Breast epithelium (tissue), 4 donors: ENCODE measurements at regions of chr22 and their contacts with region 1.

Region 1: GRCh38 chr22:24198682-24199052 is 17.4 kb downstream of the SUSD2 start:
- DNase-seq: no peak
- H3K4me3 ChIP-seq: no peak overlapping the region
- H3K27ac ChIP-seq: peak overlapping the region; percentile 78 to 89
- H3K4me1 ChIP-seq: peaks cover 0 to 5% of the 10 kb centered on the region in 2 donors
- H3K27me3 ChIP-seq: no peaks in the 10 kb centered on the region
- CTCF ChIP-seq: no peak
- POLR2A ChIP-seq: no peak

Region 2: DNA sequence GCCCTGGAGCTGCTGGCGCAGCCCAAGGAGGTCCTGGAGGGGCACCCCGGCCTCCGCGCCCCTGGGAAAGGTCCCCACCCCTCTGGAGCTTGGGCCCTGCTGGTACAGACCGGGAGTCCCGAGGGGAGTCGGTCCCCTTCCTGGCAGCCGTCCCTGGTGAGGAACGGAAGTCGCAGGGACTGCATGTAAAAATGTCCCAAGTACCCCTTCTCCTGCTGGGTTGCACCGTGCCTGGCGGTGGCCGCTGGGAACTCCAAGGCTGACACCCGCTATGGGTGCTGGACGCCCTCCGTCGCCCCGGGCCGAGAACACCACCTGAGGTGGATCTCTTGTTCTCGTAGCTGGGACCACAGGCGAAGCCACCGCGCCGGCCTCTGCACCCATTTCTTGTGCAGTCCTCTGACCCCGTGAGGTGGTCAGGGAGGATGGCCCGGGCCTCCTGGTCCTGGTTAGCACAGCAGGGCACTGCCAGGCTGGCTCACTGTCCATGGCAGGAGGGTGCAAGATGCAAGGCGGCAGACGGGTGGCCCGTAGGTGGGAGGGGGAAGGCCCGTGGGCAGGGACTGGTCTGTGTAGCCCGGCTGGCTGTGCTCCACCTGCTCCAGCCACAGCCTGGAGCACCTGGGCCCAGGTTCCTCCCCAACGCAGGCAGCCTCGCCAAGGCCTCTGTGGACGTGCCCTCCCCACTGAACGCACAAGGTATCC is 783.8 kb before region 1 on chr22:
- intact Hi-C with region 1: no loop called
- DNase-seq: no peak
- H3K4me3 ChIP-seq: no peak overlapping the region
- H3K27ac ChIP-seq: no peak overlapping the region
- H3K4me1 ChIP-seq: no peaks in the 10 kb centered on the region
- H3K27me3 ChIP-seq: no peaks in the 10 kb centered on the region
- CTCF ChIP-seq: no peak
- POLR2A ChIP-seq: no peak

Region 3: GRCh38 chr22:24037851-24038765 is 160.6 kb before region 1 on chr22:
- intact Hi-C with region 1: no loop called
- DNase-seq: no peak
- H3K4me3 ChIP-seq: no peak overlapping the region
- H3K27ac ChIP-seq: no peak overlapping the region
- H3K4me1 ChIP-seq: no peaks in the 10 kb centered on the region
- H3K27me3 ChIP-seq: no peaks in the 10 kb centered on the region
- CTCF ChIP-seq: no peak
- POLR2A ChIP-seq: no peak

Region 4: GRCh38 chr22:24230911-24231656 is 32.4 kb after region 1 on chr22:
- intact Hi-C with region 1: no loop called
- DNase-seq: no peak
- H3K4me3 ChIP-seq: no peak overlapping the region
- H3K27ac ChIP-seq: no peak overlapping the region
- H3K4me1 ChIP-seq: no peaks in the 10 kb centered on the region
- H3K27me3 ChIP-seq: no peaks in the 10 kb centered on the region
- CTCF ChIP-seq: no peak
- POLR2A ChIP-seq: no peak

Region 5: DNA sequence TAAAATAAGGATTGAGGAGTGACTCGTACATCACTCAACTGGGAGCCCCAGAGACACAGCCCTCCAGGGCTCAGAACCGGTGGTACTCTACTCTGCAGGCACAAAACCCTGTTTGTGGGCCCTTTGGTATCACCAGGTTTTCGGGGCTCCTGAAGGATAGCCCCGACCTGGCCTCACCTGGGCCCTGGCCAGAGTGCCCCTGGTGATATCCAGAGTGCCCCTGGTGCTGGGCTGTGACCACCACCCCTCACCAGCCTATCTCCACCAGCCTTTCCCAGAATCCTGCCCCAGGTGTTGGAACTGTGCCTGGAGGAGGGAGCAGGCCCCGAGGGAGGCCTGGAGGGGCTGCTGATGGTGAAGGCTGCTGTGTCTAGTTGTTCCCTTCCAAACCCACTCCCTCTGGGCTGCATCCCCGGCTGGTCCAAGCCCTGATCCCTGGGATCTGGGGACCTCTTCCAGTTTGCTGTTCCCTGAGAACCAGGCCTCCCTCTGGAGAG is 48.4 kb after region 1 on chr22:
- intact Hi-C with region 1: loop called (anchors 5 kb)
- DNase-seq: no peak
- H3K4me3 ChIP-seq: peak overlapping the region in 1 of 3 donors; percentile 5
- H3K27ac ChIP-seq: peak overlapping the region; percentile 91 to 94
- H3K4me1 ChIP-seq: peaks cover 10 to 14% of the 10 kb centered on the region in 2 donors
- H3K27me3 ChIP-seq: no peaks in the 10 kb centered on the region
- CTCF ChIP-seq: no peak
- POLR2A ChIP-seq: no peak